MCF 10A (cell line): ENCODE measurements at regions of chr1 and their contacts with region 1.

Region 1: GRCh38 chr1:162056043-162056442 is 13.4 kb upstream of the NOS1AP start:
- DNase-seq: peak; percentile 85
- H3K4me3 Mint-ChIP-seq: no peak overlapping the region
- H3K27ac Mint-ChIP-seq: no peak overlapping the region
- H3K4me1 Mint-ChIP-seq: peaks cover 14% of the 10 kb centered on the region
- H3K27me3 Mint-ChIP-seq: no peaks in the 10 kb centered on the region
- CTCF ChIP-seq: peak; percentile 99

Region 2: DNA sequence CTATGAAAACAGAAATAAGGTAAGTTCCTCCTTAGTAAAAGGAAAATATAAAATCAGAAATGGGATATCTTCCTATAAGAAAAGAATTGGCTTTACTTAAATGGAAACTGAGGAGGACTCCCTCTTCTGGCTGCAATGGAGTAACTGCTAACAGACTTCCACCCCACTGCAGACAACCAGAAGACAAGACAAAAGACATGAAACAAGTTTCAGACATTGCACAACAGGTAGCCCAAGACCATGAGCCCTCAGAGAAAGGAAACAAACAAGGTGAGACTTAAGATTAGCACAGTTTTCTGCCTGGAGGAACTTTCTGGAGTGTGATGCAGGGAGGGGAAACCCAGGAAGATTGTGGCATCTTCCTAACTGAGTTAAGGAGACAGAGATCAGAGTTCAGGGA is 15.4 kb before region 1 on chr1:
- CTCF ChIA-PET with region 1: interaction called, 128 read pairs
- POLR2A ChIA-PET with region 1: interaction called, 3 read pairs
- intact Hi-C with region 1: no loop called
- DNase-seq: peak; percentile 67
- H3K4me3 Mint-ChIP-seq: no peak overlapping the region
- H3K27ac Mint-ChIP-seq: no peak overlapping the region
- H3K4me1 Mint-ChIP-seq: peaks cover 6% of the 10 kb centered on the region
- H3K27me3 Mint-ChIP-seq: no peaks in the 10 kb centered on the region
- CTCF ChIP-seq: peak; percentile 23

Region 3: GRCh38 chr1:162230096-162230495 is 174.1 kb after region 1 on chr1:
- CTCF ChIA-PET with region 1: interaction called, 5 read pairs
- POLR2A ChIA-PET with region 1: no interaction called
- intact Hi-C with region 1: loop called (anchors 2 kb)
- DNase-seq: peak; percentile 38
- H3K4me3 Mint-ChIP-seq: no peak overlapping the region
- H3K27ac Mint-ChIP-seq: no peak overlapping the region
- H3K4me1 Mint-ChIP-seq: no peaks in the 10 kb centered on the region
- H3K27me3 Mint-ChIP-seq: no peaks in the 10 kb centered on the region
- CTCF ChIP-seq: no peak

Region 4: GRCh38 chr1:162285149-162285561 is 229.1 kb after region 1 on chr1:
- CTCF ChIA-PET with region 1: interaction called, 130 read pairs
- POLR2A ChIA-PET with region 1: interaction called, 3 read pairs
- intact Hi-C with region 1: no loop called
- DNase-seq: peak; percentile 63
- H3K4me3 Mint-ChIP-seq: no peak overlapping the region
- H3K27ac Mint-ChIP-seq: no peak overlapping the region
- H3K4me1 Mint-ChIP-seq: peaks cover 21% of the 10 kb centered on the region
- H3K27me3 Mint-ChIP-seq: no peaks in the 10 kb centered on the region
- CTCF ChIP-seq: no peak

Region 5: GRCh38 chr1:162367073-162367472 is 311.0 kb after region 1 on chr1:
- CTCF ChIA-PET with region 1: interaction called, 17 read pairs
- POLR2A ChIA-PET with region 1: no interaction called
- intact Hi-C with region 1: no loop called
- DNase-seq: no peak
- H3K4me3 Mint-ChIP-seq: no peak overlapping the region
- H3K27ac Mint-ChIP-seq: no peak overlapping the region
- H3K4me1 Mint-ChIP-seq: peaks cover 27% of the 10 kb centered on the region
- H3K27me3 Mint-ChIP-seq: no peaks in the 10 kb centered on the region
- CTCF ChIP-seq: no peak

Region 6: DNA sequence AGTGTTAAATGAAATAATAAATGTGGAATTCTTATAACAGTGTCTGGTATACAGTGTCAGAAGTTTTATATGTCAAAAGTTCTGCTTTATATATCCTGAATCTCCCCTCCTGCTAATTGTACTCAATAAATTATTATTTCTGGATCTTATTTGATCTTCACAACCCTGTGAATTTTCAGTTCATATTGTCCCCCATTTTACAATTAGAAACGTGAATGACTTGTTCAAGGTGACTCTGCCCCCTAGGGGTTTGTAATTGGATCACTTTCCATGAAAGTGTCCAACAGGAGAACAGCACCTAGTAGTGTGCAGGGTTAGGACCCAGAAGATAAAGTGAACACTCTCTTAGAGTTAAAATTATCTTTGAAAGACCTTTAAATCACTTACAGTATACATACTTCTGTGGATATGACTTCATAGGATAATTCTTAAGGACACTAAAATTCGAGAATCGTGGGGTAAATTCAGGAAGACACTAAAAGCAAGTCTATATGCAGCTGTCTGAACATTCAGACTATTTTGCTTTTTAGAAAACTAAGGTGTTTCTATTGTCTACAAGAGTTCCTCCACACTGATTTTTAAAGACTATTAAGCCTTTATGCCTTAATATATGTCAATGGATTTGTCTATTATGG is 571.7 kb after region 1 on chr1:
- CTCF ChIA-PET with region 1: no interaction called
- POLR2A ChIA-PET with region 1: no interaction called
- intact Hi-C with region 1: loop called (anchors 5 kb)
- DNase-seq: peak; percentile 71
- H3K4me3 Mint-ChIP-seq: no peak overlapping the region
- H3K27ac Mint-ChIP-seq: no peak overlapping the region
- H3K4me1 Mint-ChIP-seq: peaks cover 17% of the 10 kb centered on the region
- H3K27me3 Mint-ChIP-seq: no peaks in the 10 kb centered on the region
- CTCF ChIP-seq: peak; percentile 55